Sigmoid colon (tissue), 7 donors: ENCODE measurements at regions of chr1 and their contacts with region 1.

Region 1: GRCh38 chr1:160193091-160193819 is 2.9 kb downstream of the CASQ1 start:
- DNase-seq: peak; percentile 92
- H3K4me3 ChIP-seq: peak overlapping the region in 1 of 4 donors; percentile 14
- H3K27ac ChIP-seq: peak overlapping the region in 2 of 4 donors; percentile 25 to 68
- H3K4me1 ChIP-seq: peaks cover 0 to 37% (median 31%) of the 10 kb centered on the region in 4 donors
- H3K27me3 ChIP-seq: no peaks in the 10 kb centered on the region
- CTCF ChIP-seq: peak; percentile 95 to 99 (median 96)
- EP300 ChIP-seq: no peak
- POLR2A ChIP-seq: no peak

Region 2: DNA sequence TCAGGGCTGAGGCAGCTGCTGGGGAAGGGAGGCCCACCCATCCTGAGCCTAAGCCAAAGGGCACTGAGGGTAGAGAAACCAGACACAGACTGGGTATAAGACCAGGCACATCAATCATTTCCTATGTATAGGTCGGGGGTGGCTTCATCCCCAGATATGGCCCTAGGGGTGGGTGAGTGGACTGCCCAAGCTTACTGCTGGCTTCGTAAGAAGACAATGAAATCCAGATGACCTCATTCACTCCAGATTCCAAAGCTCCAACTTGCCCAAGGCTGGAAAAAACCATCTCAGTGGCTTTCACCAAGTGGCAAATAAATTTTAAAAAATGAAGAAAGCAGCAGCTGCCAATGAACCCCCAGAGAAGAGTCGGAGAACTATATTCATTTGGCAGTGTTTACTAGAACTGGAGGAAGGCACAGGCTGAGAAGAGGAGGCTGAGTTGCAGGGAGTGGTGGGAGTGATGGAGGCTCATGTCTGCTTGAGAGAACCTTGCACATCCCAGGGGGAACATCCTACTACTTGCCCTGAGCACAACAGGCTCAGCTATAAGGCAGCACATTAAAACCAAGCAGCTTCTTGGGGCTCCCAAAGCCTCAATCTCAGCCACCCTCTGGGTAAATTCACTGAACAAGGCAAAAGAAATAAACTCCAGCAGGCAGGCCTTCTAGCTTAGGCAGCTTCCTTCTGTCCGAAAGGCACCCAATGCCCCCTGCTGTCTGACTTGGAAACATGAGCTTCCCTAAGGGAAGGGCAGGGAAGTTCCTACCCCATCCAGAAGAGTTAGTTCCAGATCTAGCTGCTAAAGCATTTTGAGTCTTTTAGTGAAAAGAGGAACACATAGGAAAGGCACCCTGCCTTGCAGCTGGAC is 26.0 kb after region 1 on chr1:
- intact Hi-C with region 1: loop called (anchors 1 kb)
- DNase-seq: peak; percentile 81
- H3K4me3 ChIP-seq: no peak overlapping the region
- H3K27ac ChIP-seq: peak overlapping the region; percentile 73 to 84 (median 76)
- H3K4me1 ChIP-seq: peaks cover 0 to 44% (median 40%) of the 10 kb centered on the region in 4 donors
- H3K27me3 ChIP-seq: no peaks in the 10 kb centered on the region
- CTCF ChIP-seq: peak; percentile 52 to 70 (median 59)
- EP300 ChIP-seq: no peak
- POLR2A ChIP-seq: no peak

Region 3: GRCh38 chr1:160251687-160252526 is 58.7 kb after region 1 on chr1:
- intact Hi-C with region 1: loop called (anchors 2 kb)
- DNase-seq: peak; percentile 88
- H3K4me3 ChIP-seq: no peak overlapping the region
- H3K27ac ChIP-seq: peak overlapping the region; percentile 33 to 61 (median 47)
- H3K4me1 ChIP-seq: peaks cover 0 to 44% (median 34%) of the 10 kb centered on the region in 4 donors
- H3K27me3 ChIP-seq: no peaks in the 10 kb centered on the region
- CTCF ChIP-seq: peak; percentile 57 to 70 (median 62)
- EP300 ChIP-seq: no peak
- POLR2A ChIP-seq: no peak

Region 4: DNA sequence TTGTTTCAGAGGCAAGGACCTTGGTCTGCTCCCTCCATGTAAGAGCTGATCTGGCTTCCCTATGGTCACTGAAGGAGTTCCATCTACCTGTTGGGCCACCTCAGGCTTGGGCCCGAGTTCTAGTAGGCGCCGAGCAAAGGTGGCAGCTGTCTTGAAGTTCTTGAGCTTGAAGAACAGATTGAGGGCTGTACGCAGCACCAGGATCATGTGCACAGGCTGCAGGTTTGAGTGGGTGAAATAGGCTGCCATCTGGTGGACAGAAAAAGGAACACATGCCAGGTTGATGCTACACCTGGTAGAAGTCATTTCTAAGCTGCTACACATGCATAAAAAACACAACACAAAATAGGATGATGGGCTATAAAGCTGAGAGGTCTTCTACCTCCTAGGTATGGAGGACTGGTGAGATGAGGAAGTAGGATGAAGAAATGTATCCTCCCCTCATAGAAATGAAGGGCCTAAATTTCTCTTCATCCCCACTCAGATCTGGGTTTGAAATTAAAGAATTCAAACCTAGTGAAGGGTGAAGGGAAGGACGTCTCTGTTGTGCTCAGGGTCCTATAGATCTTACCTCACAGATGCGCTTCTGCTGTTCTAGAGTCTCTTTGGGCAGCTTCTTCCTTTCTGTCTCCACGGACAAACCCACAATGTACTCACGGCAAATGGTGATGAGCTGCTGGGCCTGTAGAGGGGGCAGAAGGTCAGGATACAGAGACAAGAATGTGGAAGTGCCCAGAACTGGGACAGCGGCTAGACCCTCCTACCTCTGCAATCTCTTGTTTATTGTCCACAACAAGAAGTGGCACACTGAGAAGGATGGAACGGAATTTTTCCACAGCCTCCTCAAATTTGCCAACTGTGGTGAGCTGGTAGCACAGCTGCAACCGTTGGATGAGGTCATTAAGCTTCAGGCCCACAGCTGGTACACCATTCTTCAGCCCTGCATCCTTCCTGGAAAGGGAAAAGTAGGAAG is 98.3 kb after region 1 on chr1:
- intact Hi-C with region 1: loop called (anchors 2 kb)
- DNase-seq: peak; percentile 81
- H3K4me3 ChIP-seq: no peak overlapping the region
- H3K27ac ChIP-seq: peak overlapping the region in 2 of 4 donors; percentile 29 to 47
- H3K4me1 ChIP-seq: peaks cover 0 to 4% (median 2%) of the 10 kb centered on the region in 4 donors
- H3K27me3 ChIP-seq: no peaks in the 10 kb centered on the region
- CTCF ChIP-seq: peak; percentile 73 to 88 (median 77)
- EP300 ChIP-seq: no peak
- POLR2A ChIP-seq: no peak